GM13977 (cell line): ENCODE measurements at regions of chr16 and their contacts with region 1.

Region 1: GRCh38 chr16:50671644-50672260 is 9.4 kb downstream of the SNX20 start:
- DNase-seq: peak; percentile 60
- CTCF ChIP-seq: peak; percentile 68

Region 2: GRCh38 chr16:50741808-50742575 is 70.2 kb after region 1 on chr16 and contains the start of gene CYLD:
- in situ Hi-C with region 1: loop called (anchors 10 kb)
- DNase-seq: peak; percentile 97
- CTCF ChIP-seq: no peak